ENCODE measurements at regions of chr14 and their contacts with region 1.

Region 1: DNA sequence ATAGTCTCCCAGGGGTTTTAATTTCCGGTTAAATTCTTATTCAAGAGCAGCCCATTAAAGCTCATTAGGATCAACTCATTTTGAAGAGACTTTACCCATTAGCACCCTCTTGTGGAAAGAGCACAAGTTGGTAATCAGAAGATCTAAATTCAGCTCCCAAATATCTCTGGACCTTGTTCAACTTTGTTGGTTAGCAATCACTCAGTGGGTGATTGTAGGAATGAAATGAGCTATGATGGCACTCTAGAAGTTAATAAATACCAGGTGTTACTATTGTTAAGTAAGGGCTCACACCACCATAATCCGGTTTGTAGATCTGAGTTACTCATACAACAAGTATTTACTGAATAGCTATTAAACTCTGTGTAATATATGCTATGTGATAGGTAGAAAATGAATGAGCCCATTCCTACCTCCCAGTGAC is 42.9 kb downstream of the TRIP11 start:
- DNase-seq: no peak
- ATAC-seq: peak; percentile 65
- H3K4me3 Mint-ChIP-seq: no peak overlapping the region
- H3K27ac Mint-ChIP-seq: peak overlapping the region; percentile 58
- H3K4me1 Mint-ChIP-seq: peaks cover 35% of the 10 kb centered on the region
- H3K27me3 Mint-ChIP-seq: no peaks in the 10 kb centered on the region

Region 2: GRCh38 chr14:91714805-91715204 is 282.2 kb before region 1 on chr14:
- CTCF ChIA-PET with region 1: interaction called, 10 read pairs
- DNase-seq: peak; percentile 81
- ATAC-seq: peak; percentile 93
- H3K4me3 Mint-ChIP-seq: no peak overlapping the region
- H3K27ac Mint-ChIP-seq: peak overlapping the region; percentile 87
- H3K4me1 Mint-ChIP-seq: peaks cover 6% of the 10 kb centered on the region
- H3K27me3 Mint-ChIP-seq: no peaks in the 10 kb centered on the region

Region 3: DNA sequence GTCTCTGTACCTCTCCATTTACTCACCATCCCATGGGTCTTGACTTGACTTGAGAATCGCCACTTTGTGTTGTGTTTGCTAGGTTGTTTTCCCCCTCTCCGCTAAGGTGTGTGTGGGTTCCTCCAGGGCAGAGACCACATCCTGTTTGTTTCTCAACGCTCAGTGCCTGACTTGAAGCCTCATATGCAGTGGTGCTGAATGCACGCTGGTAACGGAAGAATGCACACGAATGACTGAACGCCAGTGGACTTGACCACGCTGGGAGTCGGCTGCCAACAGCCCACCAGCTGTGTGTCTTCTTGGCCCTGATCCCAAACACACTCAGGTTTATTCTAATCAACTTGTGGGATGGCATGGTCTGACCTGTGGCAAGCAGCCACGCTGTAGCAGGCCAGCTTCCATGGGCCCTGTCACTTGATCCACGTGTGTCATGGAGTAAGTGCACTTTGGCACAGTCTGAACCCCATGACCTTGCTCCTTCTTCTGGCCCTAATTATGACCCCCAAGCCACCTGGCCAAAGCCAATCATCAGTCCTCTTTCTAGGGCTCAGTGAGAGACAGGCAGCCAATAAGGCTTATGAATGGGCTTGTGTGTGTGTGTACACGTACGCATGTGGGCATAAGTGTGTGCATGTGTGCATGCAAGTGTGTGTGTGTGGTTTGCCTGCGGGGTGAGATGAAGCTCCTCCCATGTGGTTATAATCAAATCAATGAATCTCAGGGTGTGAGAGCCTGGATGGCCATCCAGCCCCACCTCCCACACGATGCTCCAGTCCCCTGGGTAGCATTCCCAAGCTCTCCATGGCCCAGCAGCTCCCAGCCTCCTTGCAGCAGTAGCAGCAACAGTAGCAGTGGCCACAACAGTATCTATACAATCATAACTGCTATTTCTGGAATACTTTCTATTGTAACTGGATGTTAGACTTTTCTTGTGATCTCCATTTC is 123.2 kb before region 1 on chr14:
- CTCF ChIA-PET with region 1: no interaction called
- DNase-seq: peak; percentile 94
- ATAC-seq: peak; percentile 80
- H3K4me3 Mint-ChIP-seq: peak overlapping the region; percentile 67
- H3K27ac Mint-ChIP-seq: peak overlapping the region; percentile 87
- H3K4me1 Mint-ChIP-seq: peaks cover 70% of the 10 kb centered on the region
- H3K27me3 Mint-ChIP-seq: no peaks in the 10 kb centered on the region

Region 4: DNA sequence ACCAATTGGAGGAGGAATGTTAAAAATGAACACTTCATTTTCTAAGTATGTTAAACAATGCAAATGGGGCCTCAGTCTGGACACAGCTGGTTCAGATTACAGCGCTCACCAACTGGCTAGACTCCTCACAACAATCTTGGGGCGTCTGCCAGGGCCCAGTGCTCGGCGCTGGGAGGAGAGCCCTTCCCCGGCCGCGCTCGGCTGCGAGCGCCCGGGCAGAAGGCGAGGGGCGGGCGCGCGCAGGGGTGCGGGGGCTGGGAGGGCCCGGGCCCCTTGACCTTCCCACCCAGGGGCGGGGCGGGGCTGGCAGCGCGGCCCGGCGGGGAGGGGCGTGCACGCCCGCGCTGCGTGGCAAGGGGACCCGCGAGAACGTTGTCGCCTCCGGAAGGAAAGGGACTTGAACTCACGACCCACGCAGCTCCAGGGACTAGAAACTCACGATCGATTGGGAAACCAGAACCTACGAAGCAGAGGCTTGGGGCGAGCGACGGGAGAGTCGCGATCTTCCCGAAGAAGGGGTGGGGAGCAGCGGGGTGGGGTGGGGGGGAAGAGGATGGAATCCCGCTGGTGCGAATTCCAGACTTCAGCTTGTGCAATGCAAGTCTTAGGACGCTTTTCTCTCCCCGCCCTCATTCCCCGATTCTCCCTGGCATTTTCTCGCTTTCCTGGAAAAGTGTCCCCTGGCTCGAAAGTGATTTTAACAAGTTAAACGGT is 49.3 kb before region 1 on chr14 and contains the start of gene FBLN5:
- CTCF ChIA-PET with region 1: no interaction called
- DNase-seq: no peak
- ATAC-seq: peak; percentile 81
- H3K4me3 Mint-ChIP-seq: peak within 1 kb of the TSS; percentile 72
- H3K27ac Mint-ChIP-seq: no peak within 1 kb of the TSS
- H3K4me1 Mint-ChIP-seq: peaks cover 18% of the 10 kb centered on the region
- H3K27me3 Mint-ChIP-seq: peaks cover 60% of the 10 kb centered on the region
- total RNA-seq, gene FBLN5: 0.23 to 0.73 TPM

Region 5: GRCh38 chr14:91963465-91963864 is 33.5 kb before region 1 on chr14:
- CTCF ChIA-PET with region 1: no interaction called
- DNase-seq: no peak
- ATAC-seq: no peak
- H3K4me3 Mint-ChIP-seq: no peak overlapping the region
- H3K27ac Mint-ChIP-seq: no peak overlapping the region
- H3K4me1 Mint-ChIP-seq: peaks cover 11% of the 10 kb centered on the region
- H3K27me3 Mint-ChIP-seq: no peaks in the 10 kb centered on the region

Region 6: DNA sequence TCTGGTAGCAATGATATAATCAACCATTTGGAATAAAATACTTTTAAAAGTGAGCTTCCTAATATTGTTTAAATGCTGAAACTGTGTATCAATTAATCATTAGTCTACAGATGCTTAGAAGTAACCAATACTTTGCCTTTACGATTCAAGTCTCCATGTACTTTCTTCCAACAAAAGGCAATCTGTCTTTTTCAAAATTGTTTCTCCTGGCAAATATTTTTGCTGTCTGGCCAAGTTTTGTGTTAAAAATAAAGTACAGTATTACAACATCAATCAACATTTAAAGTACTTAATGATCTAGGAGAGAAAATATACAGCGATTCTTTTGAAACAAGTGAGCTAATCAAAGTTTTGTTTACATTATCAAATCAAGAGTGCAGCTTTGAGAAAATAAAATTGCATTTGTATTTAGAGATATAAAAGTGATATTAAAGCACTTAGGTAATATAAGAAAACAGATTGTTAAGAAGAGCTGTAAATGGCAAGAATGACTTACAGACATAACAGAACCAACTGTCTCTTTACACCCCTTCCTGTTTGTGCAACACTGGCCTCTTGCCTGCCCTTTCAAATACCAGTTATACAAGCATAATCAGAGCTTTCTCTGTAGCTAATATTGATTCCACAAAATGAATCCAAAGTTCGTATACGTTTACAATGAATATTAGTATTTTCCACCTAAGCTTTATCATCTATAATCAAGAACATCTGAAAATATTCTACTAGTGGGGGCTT is 11.3 kb before region 1 on chr14:
- CTCF ChIA-PET with region 1: interaction called, 12 read pairs
- DNase-seq: no peak
- ATAC-seq: no peak
- H3K4me3 Mint-ChIP-seq: no peak overlapping the region
- H3K27ac Mint-ChIP-seq: no peak overlapping the region
- H3K4me1 Mint-ChIP-seq: no peaks in the 10 kb centered on the region
- H3K27me3 Mint-ChIP-seq: no peaks in the 10 kb centered on the region

Measured in activated CD8-positive, alpha-beta memory T cell treated with anti-CD3 and anti-CD28 coated beads, Interleukin-2, amount 10 ng/mL, durations not matched to agents 7 days and 5 days (primary cell).